Breast epithelium (tissue), 4 donors: ENCODE measurements at regions of chr9 and their contacts with region 1.

Region 1: GRCh38 chr9:6015278-6016157 is at the start of gene RANBP6:
- DNase-seq: peak; percentile 88 to 93
- H3K4me3 ChIP-seq: peak within 1 kb of the TSS; percentile 59 to 83 (median 81)
- H3K27ac ChIP-seq: peak within 1 kb of the TSS; percentile 90 to 92
- H3K4me1 ChIP-seq: peaks cover 0 to 10% of the 10 kb centered on the region in 2 donors
- H3K27me3 ChIP-seq: no peaks in the 10 kb centered on the region
- CTCF ChIP-seq: no peak
- POLR2A ChIP-seq: no peak
- total RNA-seq, gene RANBP6: 16.1 to 24.9 (median 19.2) TPM

Region 2: GRCh38 chr9:6034954-6035353 is 19.4 kb after region 1 on chr9:
- intact Hi-C with region 1: loop called (anchors 1 kb)
- DNase-seq: no peak
- H3K4me3 ChIP-seq: no peak overlapping the region
- H3K27ac ChIP-seq: no peak overlapping the region
- H3K4me1 ChIP-seq: no peaks in the 10 kb centered on the region
- H3K27me3 ChIP-seq: no peaks in the 10 kb centered on the region
- CTCF ChIP-seq: no peak
- POLR2A ChIP-seq: no peak